ENCODE measurements at regions of chr1 and their contacts with region 1.

Region 1: GRCh38 chr1:169794530-169795416 is at the start of gene METTL18:
- DNase-seq: peak; percentile 95
- H3K4me3 Mint-ChIP-seq: peak within 1 kb of the TSS; percentile 84
- H3K27ac Mint-ChIP-seq: peak within 1 kb of the TSS; percentile 88
- H3K4me1 Mint-ChIP-seq: peaks cover 55% of the 10 kb centered on the region
- H3K27me3 Mint-ChIP-seq: no peaks in the 10 kb centered on the region
- total RNA-seq, gene METTL18: 14.2 to 15.7 TPM

Region 2: DNA sequence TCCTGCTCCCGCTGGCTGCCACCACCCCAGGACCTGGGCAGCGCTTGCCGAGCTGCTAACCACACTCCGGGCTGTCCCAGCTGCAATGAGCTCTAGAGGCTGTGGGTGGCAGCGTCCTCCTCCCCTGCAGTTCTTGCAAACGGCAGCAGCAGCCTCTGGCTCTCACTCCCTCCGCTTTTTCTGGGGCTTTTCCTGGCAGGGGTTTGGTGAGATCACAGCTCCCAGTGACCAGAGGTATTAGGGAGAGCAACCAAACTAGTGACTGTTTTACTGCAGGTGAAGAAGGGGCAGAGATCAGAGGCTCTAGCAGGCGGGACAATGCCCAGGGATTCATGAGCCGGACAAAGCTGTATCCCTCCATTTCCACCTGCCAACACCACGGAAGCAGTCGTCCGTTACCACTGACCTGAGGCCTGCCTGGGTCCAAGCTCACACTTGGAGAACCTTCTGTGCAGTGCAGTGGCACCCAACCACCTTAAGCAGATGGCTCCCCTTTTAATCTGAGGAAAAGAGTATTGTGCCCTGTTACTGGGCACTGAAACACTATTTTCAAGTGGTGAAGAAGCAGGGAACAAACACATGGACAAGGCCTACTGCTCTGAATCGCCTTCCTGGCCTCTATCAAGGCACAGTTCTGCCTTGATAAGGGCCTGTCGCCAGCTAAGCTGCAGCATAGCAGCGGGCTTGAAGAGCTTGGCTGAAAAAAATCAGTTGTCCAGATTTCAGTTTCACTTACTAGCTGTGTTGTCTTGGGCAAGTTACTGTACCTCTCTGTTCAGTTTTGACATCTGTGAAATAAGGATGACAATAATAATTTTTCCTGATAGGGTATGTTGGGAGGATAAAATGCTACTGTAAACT is 208.1 kb before region 1 on chr1 and contains the start of gene F5:
- CTCF ChIA-PET with region 1: interaction called, 12 read pairs
- POLR2A ChIA-PET with region 1: interaction called, 11 read pairs
- DNase-seq: peak; percentile 85
- H3K4me3 Mint-ChIP-seq: peak within 1 kb of the TSS; percentile 87
- H3K27ac Mint-ChIP-seq: peak within 1 kb of the TSS; percentile 77
- H3K4me1 Mint-ChIP-seq: peaks cover 68% of the 10 kb centered on the region
- H3K27me3 Mint-ChIP-seq: no peaks in the 10 kb centered on the region
- total RNA-seq, gene F5: 8.9 to 11.0 TPM

Region 3: DNA sequence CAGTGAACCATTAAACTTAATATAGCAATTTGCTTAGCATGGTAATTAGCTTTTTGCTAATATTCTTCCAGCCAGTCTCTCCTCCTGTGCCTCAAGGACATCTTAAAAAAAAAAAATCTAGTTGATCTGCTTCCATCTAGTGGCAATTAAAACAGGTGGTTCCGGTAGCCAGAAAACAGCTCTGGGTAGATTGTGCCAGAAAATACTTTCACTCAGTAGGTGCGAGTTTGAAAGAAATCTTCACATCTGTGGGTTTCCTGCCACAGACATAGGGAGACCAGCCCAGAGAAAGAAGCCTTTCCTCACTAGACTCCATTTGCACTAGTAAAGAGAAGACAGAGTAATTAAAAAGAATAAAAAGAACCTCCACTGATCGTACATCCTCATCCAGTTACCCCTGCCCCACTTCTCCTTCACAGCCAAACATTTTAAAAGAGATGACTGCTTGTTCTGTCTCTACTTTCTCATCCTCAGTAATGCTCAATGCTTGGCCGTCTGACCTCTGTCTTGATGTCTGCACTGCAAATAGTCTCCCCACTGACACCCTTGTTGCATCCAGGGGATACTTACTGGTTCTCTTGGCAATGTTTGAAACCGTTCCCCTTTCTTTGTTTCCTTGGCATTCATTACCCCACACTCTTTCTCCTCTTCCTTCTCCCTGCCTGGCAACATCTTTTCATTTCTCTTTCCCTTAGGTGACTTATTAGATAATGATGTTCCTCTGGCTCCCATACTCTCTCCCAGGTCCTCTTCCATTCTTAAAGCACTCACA is 100.3 kb before region 1 on chr1:
- CTCF ChIA-PET with region 1: interaction called, 8 read pairs
- POLR2A ChIA-PET with region 1: interaction called, 42 read pairs
- DNase-seq: peak; percentile 65
- H3K4me3 Mint-ChIP-seq: peak overlapping the region; percentile 31
- H3K27ac Mint-ChIP-seq: peak overlapping the region; percentile 88
- H3K4me1 Mint-ChIP-seq: peaks cover 96% of the 10 kb centered on the region
- H3K27me3 Mint-ChIP-seq: no peaks in the 10 kb centered on the region

Region 4: GRCh38 chr1:169711469-169712281 is 83.1 kb before region 1 on chr1 and contains the start of gene SELL:
- CTCF ChIA-PET with region 1: interaction called, 5 read pairs
- POLR2A ChIA-PET with region 1: interaction called, 29 read pairs
- DNase-seq: peak; percentile 83
- H3K4me3 Mint-ChIP-seq: peak within 1 kb of the TSS; percentile 82
- H3K27ac Mint-ChIP-seq: peak within 1 kb of the TSS; percentile 80
- H3K4me1 Mint-ChIP-seq: peaks cover 28% of the 10 kb centered on the region
- H3K27me3 Mint-ChIP-seq: peaks cover 27% of the 10 kb centered on the region
- total RNA-seq, gene SELL: 297 to 316 TPM

Region 5: GRCh38 chr1:169809370-169810095 is 14.8 kb after region 1 on chr1:
- CTCF ChIA-PET with region 1: interaction called, 12 read pairs
- POLR2A ChIA-PET with region 1: interaction called, 3 read pairs
- DNase-seq: no peak
- H3K4me3 Mint-ChIP-seq: no peak overlapping the region
- H3K27ac Mint-ChIP-seq: no peak overlapping the region
- H3K4me1 Mint-ChIP-seq: peaks cover 8% of the 10 kb centered on the region
- H3K27me3 Mint-ChIP-seq: no peaks in the 10 kb centered on the region